Psoas muscle (tissue), 8 donors: ENCODE measurements at regions of chr3 and their contacts with region 1.

Region 1: GRCh38 chr3:132253262-132253878 is 63.8 kb upstream of the ACP3 start:
- DNase-seq: no peak
- ATAC-seq: peak in 1 of 4 donors; percentile 61
- H3K4me3 ChIP-seq: no peak overlapping the region
- H3K27ac ChIP-seq: no peak overlapping the region
- H3K4me1 ChIP-seq: no peaks in the 10 kb centered on the region
- H3K27me3 ChIP-seq: no peaks in the 10 kb centered on the region
- CTCF ChIP-seq: peak; percentile 57

Region 2: DNA sequence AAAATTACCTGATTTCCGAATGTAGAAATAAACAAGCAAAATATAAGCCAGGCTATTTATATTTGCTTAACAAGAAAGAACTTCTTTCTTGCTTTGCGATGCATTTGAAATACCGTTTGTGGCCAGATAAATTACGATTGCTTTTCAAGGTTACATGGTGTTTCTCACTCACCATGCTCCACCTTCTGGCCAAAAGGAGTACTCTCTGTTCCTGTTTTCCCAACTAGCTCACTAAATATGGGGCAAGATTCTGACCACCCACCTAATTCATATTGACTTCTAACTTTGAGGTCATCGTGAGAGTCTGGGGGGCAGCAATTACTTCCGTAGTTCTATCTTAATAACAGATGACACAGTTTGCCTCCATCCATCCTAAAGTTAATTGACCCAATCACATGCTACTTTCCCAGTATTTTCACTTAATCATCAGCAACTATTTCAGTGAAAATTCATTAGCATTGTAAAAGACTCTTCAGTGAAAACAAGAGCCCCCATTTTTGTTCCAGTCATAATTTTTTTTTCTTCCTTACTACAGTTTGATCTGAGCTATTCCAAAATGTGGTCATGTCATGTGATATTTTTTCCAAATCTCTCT is 89.7 kb after region 1 on chr3:
- intact Hi-C with region 1: loop called (anchors 2 to 5 kb)
- DNase-seq: no peak
- ATAC-seq: peak in 2 of 4 donors; percentile 59 to 71
- H3K4me3 ChIP-seq: no peak overlapping the region
- H3K27ac ChIP-seq: no peak overlapping the region
- H3K4me1 ChIP-seq: peaks cover 8% of the 10 kb centered on the region
- H3K27me3 ChIP-seq: no peaks in the 10 kb centered on the region
- CTCF ChIP-seq: peak; percentile 72

Region 3: GRCh38 chr3:132399054-132399929 is 145.9 kb after region 1 on chr3:
- intact Hi-C with region 1: loop called in 1 of 2 experiments (anchors 5 kb)
- DNase-seq: no peak
- ATAC-seq: peak in 3 of 4 donors; percentile 56 to 63 (median 57)
- H3K4me3 ChIP-seq: no peak overlapping the region
- H3K27ac ChIP-seq: no peak overlapping the region
- H3K4me1 ChIP-seq: no peaks in the 10 kb centered on the region
- H3K27me3 ChIP-seq: no peaks in the 10 kb centered on the region
- CTCF ChIP-seq: peak; percentile 70